Activated B cell treated with CpG ODN at 0.5 μM for 24 hours (primary cell): ENCODE measurements at regions of chr6 and their contacts with region 1.

Region 1: GRCh38 chr6:32483968-32484636 is 44.4 kb downstream of the HLA-DRA start:
- DNase-seq: no peak
- ATAC-seq: no peak
- H3K4me3 Mint-ChIP-seq: no peak overlapping the region
- H3K27ac Mint-ChIP-seq: peak overlapping the region; percentile 41
- H3K4me1 Mint-ChIP-seq: peaks cover 25% of the 10 kb centered on the region
- H3K27me3 Mint-ChIP-seq: no peaks in the 10 kb centered on the region
- CTCF ChIP-seq: no peak

Region 2: GRCh38 chr6:32244946-32245398 is 239.1 kb before region 1 on chr6:
- CTCF ChIA-PET with region 1: no interaction called
- POLR2A ChIA-PET with region 1: no interaction called
- intact Hi-C with region 1: no loop called
- DNase-seq: peak; percentile 77
- ATAC-seq: peak; percentile 91
- H3K4me3 Mint-ChIP-seq: peak overlapping the region; percentile 81
- H3K27ac Mint-ChIP-seq: peak overlapping the region; percentile 50
- H3K4me1 Mint-ChIP-seq: peaks cover 16% of the 10 kb centered on the region
- H3K27me3 Mint-ChIP-seq: no peaks in the 10 kb centered on the region
- CTCF ChIP-seq: no peak

Region 3: DNA sequence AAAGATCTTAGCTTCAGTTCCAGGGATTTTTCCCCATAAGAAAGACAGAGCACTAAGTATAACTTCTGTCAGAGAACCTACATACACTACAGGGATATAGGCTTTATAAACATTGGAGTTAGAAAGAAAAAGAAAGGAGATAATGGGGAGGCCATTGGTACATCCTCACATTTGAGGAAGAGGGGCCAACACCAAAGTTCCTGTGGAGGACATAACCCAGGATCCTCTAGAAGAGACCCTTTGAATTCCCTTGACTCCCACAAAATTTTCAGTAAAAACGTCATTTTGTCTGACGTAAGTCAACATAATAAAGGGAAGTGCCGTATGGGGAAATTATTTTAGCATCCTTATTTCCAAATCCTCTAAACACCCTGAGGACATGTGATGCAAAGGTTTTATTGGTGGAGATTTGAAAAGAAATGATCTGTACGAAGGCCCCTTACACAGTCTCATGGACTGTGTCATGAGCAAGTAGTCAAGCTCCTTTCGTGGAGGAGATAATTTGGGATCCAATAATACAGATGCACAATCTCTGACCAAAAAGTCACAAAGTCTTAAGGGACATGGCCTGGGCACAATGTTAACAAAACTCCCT is 11.2 kb before region 1 on chr6:
- CTCF ChIA-PET with region 1: no interaction called
- POLR2A ChIA-PET with region 1: interaction called, 16 read pairs
- intact Hi-C with region 1: no loop called
- DNase-seq: no peak
- ATAC-seq: peak; percentile 16
- H3K4me3 Mint-ChIP-seq: peak overlapping the region; percentile 80
- H3K27ac Mint-ChIP-seq: peak overlapping the region; percentile 99
- H3K4me1 Mint-ChIP-seq: peaks cover 36% of the 10 kb centered on the region
- H3K27me3 Mint-ChIP-seq: no peaks in the 10 kb centered on the region
- CTCF ChIP-seq: no peak

Region 4: GRCh38 chr6:32501016-32501415 is 16.9 kb after region 1 on chr6:
- CTCF ChIA-PET with region 1: no interaction called
- POLR2A ChIA-PET with region 1: no interaction called
- intact Hi-C with region 1: no loop called
- DNase-seq: no peak
- ATAC-seq: no peak
- H3K4me3 Mint-ChIP-seq: no peak overlapping the region
- H3K27ac Mint-ChIP-seq: no peak overlapping the region
- H3K4me1 Mint-ChIP-seq: peaks cover 16% of the 10 kb centered on the region
- H3K27me3 Mint-ChIP-seq: no peaks in the 10 kb centered on the region
- CTCF ChIP-seq: no peak

Region 5: DNA sequence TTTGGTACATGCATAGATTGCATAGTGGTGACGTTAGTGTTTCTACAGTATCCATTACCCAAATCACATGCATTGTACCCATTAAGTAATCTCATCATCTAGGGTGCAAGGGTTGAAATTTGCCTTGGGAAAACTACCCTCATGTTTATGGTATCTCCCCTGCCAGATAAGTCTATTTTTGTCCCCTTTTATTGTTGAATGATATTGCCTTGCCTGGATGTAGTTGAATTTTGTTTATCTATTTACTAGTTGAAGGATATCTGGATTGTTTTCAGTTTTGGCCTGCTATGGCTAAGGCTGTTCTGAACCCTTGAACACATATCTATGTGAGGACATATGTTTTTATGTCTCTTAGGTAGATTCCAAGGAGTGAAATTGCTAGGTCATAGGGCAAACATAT is 92.1 kb after region 1 on chr6:
- CTCF ChIA-PET with region 1: no interaction called
- POLR2A ChIA-PET with region 1: no interaction called
- intact Hi-C with region 1: loop called (anchors 10 kb)
- DNase-seq: no peak
- ATAC-seq: no peak
- H3K4me3 Mint-ChIP-seq: no peak overlapping the region
- H3K27ac Mint-ChIP-seq: peak overlapping the region; percentile 37
- H3K4me1 Mint-ChIP-seq: peaks cover 21% of the 10 kb centered on the region
- H3K27me3 Mint-ChIP-seq: no peaks in the 10 kb centered on the region
- CTCF ChIP-seq: no peak

Region 6: GRCh38 chr6:33075568-33076405 is 591.7 kb after region 1 on chr6 and contains the start of gene HLA-DPB1:
- CTCF ChIA-PET with region 1: no interaction called
- POLR2A ChIA-PET with region 1: no interaction called
- intact Hi-C with region 1: no loop called
- DNase-seq: peak; percentile 42
- ATAC-seq: peak; percentile 76
- H3K4me3 Mint-ChIP-seq: peak within 1 kb of the TSS; percentile 95
- H3K27ac Mint-ChIP-seq: peak within 1 kb of the TSS; percentile 99
- H3K4me1 Mint-ChIP-seq: peaks cover 66% of the 10 kb centered on the region
- H3K27me3 Mint-ChIP-seq: no peaks in the 10 kb centered on the region
- CTCF ChIP-seq: no peak
- total RNA-seq, gene HLA-DPB1: 853 and 854 TPM in 2 replicates